ENCODE measurements at regions of chr1 and their contacts with region 1.

Region 1: DNA sequence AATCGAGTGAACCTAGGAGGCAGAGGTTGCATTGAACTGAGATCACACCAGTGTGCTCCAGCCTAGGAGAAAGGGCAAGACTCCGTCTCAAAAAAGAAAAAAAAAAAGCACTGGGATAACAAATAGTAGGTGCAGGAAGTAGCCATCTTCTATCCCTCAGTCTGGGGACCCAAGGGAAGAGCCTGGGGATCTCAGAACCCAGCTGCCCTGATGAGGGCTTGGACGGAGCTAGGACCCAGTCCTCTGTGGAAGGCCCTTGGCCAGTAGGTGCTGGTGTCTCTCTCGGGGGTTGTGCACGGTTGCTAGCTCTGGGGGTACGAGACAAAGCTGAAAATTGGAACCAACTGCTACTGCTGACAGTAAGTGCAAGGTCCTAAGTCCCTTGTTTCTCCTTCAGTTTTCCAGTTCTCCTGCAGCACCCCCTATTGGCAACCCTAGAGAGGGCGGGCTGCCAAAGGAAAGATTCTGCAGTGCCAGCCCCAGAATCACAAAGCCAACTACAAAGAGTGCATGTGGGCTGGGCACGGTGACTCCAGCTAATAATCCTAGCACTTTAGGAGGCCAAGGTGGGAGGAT is 57.6 kb upstream of the KIF1B start:
- DNase-seq: no peak
- ATAC-seq: peak; percentile 79
- H3K4me3 ChIP-seq: no peak overlapping the region
- H3K27ac ChIP-seq: peak overlapping the region; percentile 38
- H3K4me1 ChIP-seq: peaks cover 7% of the 10 kb centered on the region
- H3K27me3 ChIP-seq: no peaks in the 10 kb centered on the region
- CTCF ChIP-seq: peak; percentile 74
- EP300 ChIP-seq: no peak
- POLR2A ChIP-seq: no peak
- RAD21 ChIP-seq: peak; percentile 30; the same call in 1 of the 2 replicates

Region 2: GRCh38 chr1:9957726-9958125 is 195.1 kb before region 1 on chr1:
- CTCF ChIA-PET with region 1: no interaction called
- POLR2A ChIA-PET with region 1: no interaction called
- in situ Hi-C with region 1: no loop called
- intact Hi-C with region 1: loop called (anchors 5 kb)
- DNase-seq: no peak
- ATAC-seq: no peak
- H3K4me3 ChIP-seq: no peak overlapping the region
- H3K27ac ChIP-seq: no peak overlapping the region
- H3K4me1 ChIP-seq: 0 out of 2 replicates have a peak, but pooled peaks cover 2% of the 10 kb centered on the region
- H3K27me3 ChIP-seq: no peaks in the 10 kb centered on the region
- CTCF ChIP-seq: no peak
- EP300 ChIP-seq: no peak
- POLR2A ChIP-seq: no peak
- RAD21 ChIP-seq: no peak